Activated CD4-positive, alpha-beta T cell treated with anti-CD3 and anti-CD28 coated beads, Interleukin-2, amount 10 ng/mL, durations not matched to agents 7 days and 5 days (primary cell): ENCODE measurements at regions of chr16 and their contacts with region 1.

Region 1: DNA sequence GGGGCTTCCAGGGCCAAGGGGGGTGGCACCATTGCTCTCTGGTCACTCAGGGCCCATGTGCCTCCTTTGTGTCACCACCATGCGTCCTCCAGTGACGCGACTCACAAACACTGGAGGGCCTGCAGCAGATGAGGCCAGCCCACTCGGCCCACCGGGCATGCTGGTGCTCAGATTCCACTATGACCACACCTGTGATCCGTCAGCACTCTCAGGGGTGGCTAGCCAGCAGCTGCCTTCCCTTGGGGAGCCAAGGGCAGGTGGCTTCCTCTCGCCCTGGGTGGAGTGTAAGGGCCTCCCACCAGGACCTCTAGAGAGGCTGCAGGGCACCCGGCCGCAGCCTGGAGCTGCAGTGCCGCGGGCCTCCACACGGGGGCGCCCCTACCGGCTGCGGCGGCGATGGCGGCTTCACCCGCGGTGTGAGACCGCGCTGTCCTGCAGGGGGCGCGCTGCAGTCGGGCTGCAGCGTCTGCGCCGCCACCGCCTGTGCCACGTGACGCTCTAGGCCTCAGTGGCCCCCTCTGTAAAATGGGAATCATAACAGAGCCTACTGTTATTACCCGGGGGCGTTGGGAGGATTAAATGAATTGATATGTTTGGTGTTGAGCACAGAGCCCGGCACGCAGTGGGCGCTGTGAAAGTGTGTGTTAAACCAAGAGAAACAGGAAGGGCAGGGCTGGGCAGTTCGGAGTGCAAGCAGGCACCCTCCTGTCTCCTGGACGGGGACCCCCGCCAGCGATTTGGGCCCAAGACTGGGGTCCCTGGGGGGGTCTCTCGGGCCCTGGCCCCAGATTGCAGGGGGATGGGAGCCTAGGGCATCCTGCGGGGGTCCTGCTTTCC is 192.4 kb upstream of the GSE1 start:
- DNase-seq: peak; percentile 68
- H3K4me3 Mint-ChIP-seq: no peak overlapping the region
- H3K27ac Mint-ChIP-seq: no peak overlapping the region
- H3K4me1 Mint-ChIP-seq: peaks cover 4% of the 10 kb centered on the region
- H3K27me3 Mint-ChIP-seq: no peaks in the 10 kb centered on the region

Region 2: GRCh38 chr16:85286970-85287824 is 133.5 kb before region 1 on chr16:
- CTCF ChIA-PET with region 1: no interaction called
- POLR2A ChIA-PET with region 1: no interaction called
- DNase-seq: no peak
- H3K4me3 Mint-ChIP-seq: no peak overlapping the region
- H3K27ac Mint-ChIP-seq: no peak overlapping the region
- H3K4me1 Mint-ChIP-seq: no peaks in the 10 kb centered on the region
- H3K27me3 Mint-ChIP-seq: no peaks in the 10 kb centered on the region

Region 3: DNA sequence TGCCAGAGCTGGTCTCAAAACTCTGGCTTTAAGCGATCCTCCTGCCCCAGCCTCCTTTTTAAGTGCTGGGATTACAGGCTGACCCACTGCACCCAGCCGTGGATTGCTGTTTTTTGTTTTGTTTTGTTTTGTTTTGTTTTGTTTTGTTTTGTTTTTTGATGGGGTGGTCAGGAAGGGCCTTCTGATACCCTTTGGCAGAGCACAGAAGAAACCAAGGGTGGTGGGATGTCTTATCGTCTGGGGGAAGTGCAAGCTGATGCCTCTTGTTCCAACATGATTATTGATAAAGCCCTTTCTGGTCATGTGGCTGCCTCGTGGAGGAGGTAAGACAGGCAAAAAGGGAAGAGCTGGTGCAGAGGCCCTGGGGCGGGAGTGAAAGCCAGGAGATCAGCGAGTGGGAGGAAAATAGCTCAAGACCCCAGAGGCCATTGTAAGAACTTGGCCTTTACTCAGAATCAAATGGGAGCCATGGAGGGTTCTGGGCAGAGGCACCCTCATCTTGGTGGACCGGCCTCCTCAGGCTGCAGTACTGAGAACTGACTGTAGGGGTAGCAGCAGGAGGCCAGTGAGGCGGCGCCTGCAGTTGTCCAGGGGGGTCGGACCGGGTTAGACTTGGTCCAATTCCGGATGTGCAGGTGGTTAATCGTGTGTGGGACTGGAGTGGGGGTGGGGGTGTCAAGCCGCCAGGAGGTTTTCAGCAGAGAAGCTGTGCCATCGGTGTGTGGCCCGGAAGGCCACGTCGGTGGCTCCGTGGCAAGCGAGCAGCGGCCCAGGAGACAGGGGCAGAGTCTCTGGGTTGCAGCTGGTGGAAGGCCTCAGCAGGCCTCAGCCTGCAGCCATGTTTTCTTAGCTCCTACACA is 108.0 kb after region 1 on chr16:
- CTCF ChIA-PET with region 1: no interaction called
- POLR2A ChIA-PET with region 1: no interaction called
- DNase-seq: peak; percentile 15
- H3K4me3 Mint-ChIP-seq: no peak overlapping the region
- H3K27ac Mint-ChIP-seq: no peak overlapping the region
- H3K4me1 Mint-ChIP-seq: no peaks in the 10 kb centered on the region
- H3K27me3 Mint-ChIP-seq: no peaks in the 10 kb centered on the region

Region 4: DNA sequence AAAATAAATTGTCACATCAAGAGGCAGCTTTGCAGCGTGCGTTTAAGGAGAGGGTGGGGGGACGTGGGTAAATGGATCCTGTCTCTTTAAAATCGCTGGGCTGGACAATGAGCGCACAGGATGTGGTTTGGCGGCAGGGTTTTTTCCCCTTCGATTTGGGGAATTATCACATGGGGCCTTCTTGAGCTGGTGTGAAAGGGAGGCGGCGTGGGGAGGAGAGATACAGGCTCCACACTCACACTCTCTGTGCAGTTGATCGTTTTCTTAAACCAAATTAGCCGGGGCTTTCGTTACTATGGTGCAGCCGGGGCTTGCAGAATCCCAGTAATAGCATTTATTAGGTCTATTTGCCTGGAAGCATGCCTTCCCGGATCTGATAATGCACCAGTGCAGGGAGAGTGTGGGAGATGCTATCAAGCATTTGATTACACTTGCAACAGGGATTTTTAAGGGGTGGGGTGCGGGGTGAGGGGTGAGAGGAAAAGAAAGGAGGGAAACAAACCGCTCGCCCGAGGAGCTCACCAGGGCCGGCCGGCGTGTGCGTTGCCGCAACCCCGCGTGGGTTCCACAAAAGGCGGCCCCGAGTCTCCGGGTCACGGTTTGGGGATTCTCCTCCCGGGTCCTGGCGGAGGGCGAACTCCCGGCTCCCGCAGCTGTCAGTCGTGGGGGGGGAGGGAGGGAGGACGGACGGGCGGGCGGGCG is 133.5 kb after region 1 on chr16:
- CTCF ChIA-PET with region 1: interaction called, 14 read pairs
- POLR2A ChIA-PET with region 1: no interaction called
- DNase-seq: peak; percentile 84
- H3K4me3 Mint-ChIP-seq: peak overlapping the region; percentile 88
- H3K27ac Mint-ChIP-seq: peak overlapping the region; percentile 96
- H3K4me1 Mint-ChIP-seq: peaks cover 36% of the 10 kb centered on the region
- H3K27me3 Mint-ChIP-seq: peaks cover 3% of the 10 kb centered on the region

Region 5: GRCh38 chr16:85610508-85611332 is 190.0 kb after region 1 on chr16:
- CTCF ChIA-PET with region 1: interaction called, 55 read pairs
- POLR2A ChIA-PET with region 1: no interaction called
- DNase-seq: peak; percentile 84
- H3K4me3 Mint-ChIP-seq: peak overlapping the region; percentile 57
- H3K27ac Mint-ChIP-seq: no peak overlapping the region
- H3K4me1 Mint-ChIP-seq: peaks cover 28% of the 10 kb centered on the region
- H3K27me3 Mint-ChIP-seq: peaks cover 12% of the 10 kb centered on the region